ENCODE measurements at regions of chr5 and their contacts with region 1.

Region 1: DNA sequence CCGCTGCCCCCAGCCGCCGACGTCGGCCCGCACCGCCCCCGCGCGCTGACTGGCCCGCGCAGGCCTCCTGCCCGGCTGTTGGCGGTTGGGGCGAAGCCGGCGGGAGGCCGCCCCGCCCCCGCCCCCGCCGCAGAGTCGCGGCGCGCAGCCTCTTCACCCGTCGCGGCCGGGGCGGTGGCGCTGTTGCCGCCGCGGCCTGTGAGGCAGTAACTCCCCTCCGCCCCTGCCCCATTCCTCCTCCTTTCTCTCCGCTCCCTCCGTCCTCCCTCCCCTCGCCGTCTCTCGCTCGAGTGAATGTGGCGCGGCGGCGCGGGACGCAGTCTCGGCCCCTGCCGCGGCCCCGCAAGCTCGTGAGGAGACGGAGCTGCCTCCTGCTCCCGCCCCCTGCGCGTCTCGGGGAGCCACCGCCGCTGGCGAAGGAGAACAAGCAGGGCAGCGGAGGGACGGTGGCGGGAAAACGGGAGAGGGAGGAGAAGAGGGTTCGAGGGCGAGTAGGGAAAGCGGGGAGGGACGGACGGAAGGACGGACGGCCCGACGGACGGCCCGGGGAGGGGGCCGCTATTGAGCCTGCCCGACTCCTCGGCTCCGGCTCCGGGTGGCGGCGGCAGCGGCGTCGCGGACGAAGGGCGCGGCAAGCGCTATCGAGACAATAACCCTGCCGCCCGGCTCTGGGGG is 637 bp upstream of the ERBIN start:
- DNase-seq: peak in 8 of 9 experiments; percentile 57 to 94 (median 79)
- ATAC-seq: peak; percentile 67
- H3K4me3 ChIP-seq: peak overlapping the region; percentile 67 to 84
- H3K4me3 Mint-ChIP-seq: peak overlapping the region; percentile 91
- H3K27ac ChIP-seq: peak overlapping the region; percentile 84 to 93
- H3K27ac Mint-ChIP-seq: peak overlapping the region; percentile 95
- H3K4me1 ChIP-seq: peaks cover 26% of the 10 kb centered on the region
- H3K4me1 Mint-ChIP-seq: peaks cover 42% of the 10 kb centered on the region
- H3K27me3 ChIP-seq: no peaks in the 10 kb centered on the region
- H3K27me3 Mint-ChIP-seq: no peaks in the 10 kb centered on the region
- CTCF ChIP-seq: no peak

Region 2: GRCh38 chr5:65624571-65625555 is 300.9 kb before region 1 on chr5 and contains the starts of genes SHLD3 and TRAPPC13:
- CTCF ChIA-PET with region 1: no interaction called
- POLR2A ChIA-PET with region 1: interaction called, 3 read pairs
- intact Hi-C with region 1: loop called (anchors 1 to 2 kb)
- DNase-seq: peak; percentile 70 to 96 (median 83)
- ATAC-seq: peak; percentile 72
- H3K4me3 ChIP-seq: peak within 1 kb of the TSS; percentile 80 to 84
- H3K4me3 Mint-ChIP-seq: peak within 1 kb of the TSS; percentile 97
- H3K27ac ChIP-seq: peak within 1 kb of the TSS; percentile 78 to 91
- H3K27ac Mint-ChIP-seq: peak within 1 kb of the TSS; percentile 99
- H3K4me1 ChIP-seq: peaks cover 26% of the 10 kb centered on the region
- H3K4me1 Mint-ChIP-seq: peaks cover 56% of the 10 kb centered on the region
- H3K27me3 ChIP-seq: no peaks in the 10 kb centered on the region
- H3K27me3 Mint-ChIP-seq: no peaks in the 10 kb centered on the region
- CTCF ChIP-seq: no peak
- total RNA-seq, gene SHLD3: 11.6 to 14.5 TPM
- total RNA-seq, gene TRAPPC13: 11.9 to 17.6 TPM

Region 3: DNA sequence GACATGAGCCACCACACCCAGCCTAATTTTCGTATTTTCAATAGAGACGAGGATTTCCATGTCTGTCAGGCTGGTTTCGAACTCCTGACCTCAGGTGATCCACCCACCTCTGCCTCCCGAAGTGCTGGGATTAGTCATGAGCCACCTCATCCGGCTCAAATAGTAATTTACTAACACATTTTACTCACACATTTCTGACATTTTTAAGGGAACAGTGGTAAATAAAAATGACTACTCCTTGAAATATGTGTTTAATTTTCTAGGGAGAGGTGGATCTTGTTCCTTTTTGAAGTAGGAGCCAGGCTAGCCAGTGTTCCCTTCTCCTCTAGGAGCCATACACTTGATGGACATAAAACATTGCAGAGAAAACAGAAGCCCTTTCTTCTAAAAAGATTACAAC is 54.6 kb before region 1 on chr5:
- CTCF ChIA-PET with region 1: interaction called, 3 read pairs
- POLR2A ChIA-PET with region 1: interaction called, 5 read pairs
- intact Hi-C with region 1: loop called in 1 of 2 experiments (anchors 1 kb)
- DNase-seq: no peak
- ATAC-seq: no peak
- H3K4me3 ChIP-seq: no peak overlapping the region
- H3K4me3 Mint-ChIP-seq: no peak overlapping the region
- H3K27ac ChIP-seq: no peak overlapping the region
- H3K27ac Mint-ChIP-seq: peak overlapping the region; percentile 7
- H3K4me1 ChIP-seq: peaks cover 15% of the 10 kb centered on the region
- H3K4me1 Mint-ChIP-seq: peaks cover 22% of the 10 kb centered on the region
- H3K27me3 ChIP-seq: no peaks in the 10 kb centered on the region
- H3K27me3 Mint-ChIP-seq: no peaks in the 10 kb centered on the region
- CTCF ChIP-seq: no peak

Region 4: GRCh38 chr5:65986050-65986451 is 60.3 kb after region 1 on chr5:
- CTCF ChIA-PET with region 1: no interaction called
- POLR2A ChIA-PET with region 1: no interaction called
- intact Hi-C with region 1: loop called in 1 of 2 experiments (anchors 10 kb)
- DNase-seq: no peak
- ATAC-seq: no peak
- H3K4me3 ChIP-seq: no peak overlapping the region
- H3K4me3 Mint-ChIP-seq: no peak overlapping the region
- H3K27ac ChIP-seq: no peak overlapping the region
- H3K27ac Mint-ChIP-seq: peak overlapping the region; percentile 62
- H3K4me1 ChIP-seq: peaks cover 21% of the 10 kb centered on the region
- H3K4me1 Mint-ChIP-seq: peaks cover 65% of the 10 kb centered on the region
- H3K27me3 ChIP-seq: no peaks in the 10 kb centered on the region
- H3K27me3 Mint-ChIP-seq: no peaks in the 10 kb centered on the region
- CTCF ChIP-seq: no peak

Region 5: GRCh38 chr5:66151030-66151429 is 225.3 kb after region 1 on chr5:
- CTCF ChIA-PET with region 1: no interaction called
- POLR2A ChIA-PET with region 1: no interaction called
- intact Hi-C with region 1: no loop called
- DNase-seq: no peak
- ATAC-seq: no peak
- H3K4me3 ChIP-seq: no peak overlapping the region
- H3K4me3 Mint-ChIP-seq: no peak overlapping the region
- H3K27ac ChIP-seq: no peak overlapping the region
- H3K27ac Mint-ChIP-seq: no peak overlapping the region
- H3K4me1 ChIP-seq: peaks cover 35% of the 10 kb centered on the region
- H3K4me1 Mint-ChIP-seq: peaks cover 67% of the 10 kb centered on the region
- H3K27me3 ChIP-seq: no peaks in the 10 kb centered on the region
- H3K27me3 Mint-ChIP-seq: no peaks in the 10 kb centered on the region
- CTCF ChIP-seq: no peak

Measured in CD8-positive, alpha-beta T cell (primary cell).